Stomach (tissue), 19 donors: ENCODE measurements at regions of chr1 and their contacts with region 1.

Region 1: DNA sequence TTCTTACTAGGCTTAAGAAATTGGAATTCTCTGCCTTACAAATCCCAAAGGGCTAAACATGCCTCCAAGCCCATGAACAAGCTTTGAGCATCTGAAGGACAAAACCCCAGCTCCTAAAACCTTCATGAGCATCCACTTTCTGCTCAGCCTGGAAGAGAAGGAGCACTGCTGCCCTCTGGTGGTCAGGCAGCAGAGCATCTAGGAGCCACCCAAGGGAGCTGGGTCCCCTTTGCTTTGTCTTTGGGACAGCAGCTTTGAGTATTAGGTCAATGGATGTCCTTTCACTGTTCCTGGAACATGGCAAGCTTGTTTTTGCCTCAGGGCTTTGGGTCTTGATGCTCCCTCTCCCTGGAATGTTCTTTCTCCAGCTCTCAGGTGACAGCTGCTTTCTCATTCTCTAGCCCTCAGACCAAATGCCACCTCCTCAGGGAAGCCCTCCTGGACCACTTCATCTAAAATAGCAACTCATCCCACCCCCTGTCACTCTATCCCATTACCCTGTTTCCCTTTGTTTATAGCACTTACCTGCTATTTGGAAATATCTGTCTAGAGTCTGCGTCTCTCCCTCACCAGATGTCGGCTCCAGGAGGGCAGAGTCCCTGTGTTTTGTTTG is 25.7 kb downstream of the RAB7B start:
- DNase-seq: peak; percentile 71 to 93
- H3K4me3 ChIP-seq: no peak overlapping the region
- H3K27ac ChIP-seq: no peak overlapping the region
- H3K4me1 ChIP-seq: peaks cover 0 to 23% (median 12%) of the 10 kb centered on the region in 4 donors
- H3K27me3 ChIP-seq: no peaks in the 10 kb centered on the region
- CTCF ChIP-seq: peak in 6 of 7 experiments; percentile 11 to 96 (median 92)
- EP300 ChIP-seq: no peak
- POLR2A ChIP-seq: no peak

Region 2: GRCh38 chr1:205791568-205792180 is 185.8 kb before region 1 on chr1:
- intact Hi-C with region 1: loop called (anchors 10 kb)
- DNase-seq: peak; percentile 72 to 84
- H3K4me3 ChIP-seq: no peak overlapping the region
- H3K27ac ChIP-seq: no peak overlapping the region
- H3K4me1 ChIP-seq: no peaks in the 10 kb centered on the region
- H3K27me3 ChIP-seq: no peaks in the 10 kb centered on the region
- CTCF ChIP-seq: peak in 5 of 7 experiments; percentile 67 to 81 (median 73)
- EP300 ChIP-seq: no peak
- POLR2A ChIP-seq: no peak